GM18951 (cell line): ENCODE measurements at regions of chr13 and their contacts with region 1.

Region 1: DNA sequence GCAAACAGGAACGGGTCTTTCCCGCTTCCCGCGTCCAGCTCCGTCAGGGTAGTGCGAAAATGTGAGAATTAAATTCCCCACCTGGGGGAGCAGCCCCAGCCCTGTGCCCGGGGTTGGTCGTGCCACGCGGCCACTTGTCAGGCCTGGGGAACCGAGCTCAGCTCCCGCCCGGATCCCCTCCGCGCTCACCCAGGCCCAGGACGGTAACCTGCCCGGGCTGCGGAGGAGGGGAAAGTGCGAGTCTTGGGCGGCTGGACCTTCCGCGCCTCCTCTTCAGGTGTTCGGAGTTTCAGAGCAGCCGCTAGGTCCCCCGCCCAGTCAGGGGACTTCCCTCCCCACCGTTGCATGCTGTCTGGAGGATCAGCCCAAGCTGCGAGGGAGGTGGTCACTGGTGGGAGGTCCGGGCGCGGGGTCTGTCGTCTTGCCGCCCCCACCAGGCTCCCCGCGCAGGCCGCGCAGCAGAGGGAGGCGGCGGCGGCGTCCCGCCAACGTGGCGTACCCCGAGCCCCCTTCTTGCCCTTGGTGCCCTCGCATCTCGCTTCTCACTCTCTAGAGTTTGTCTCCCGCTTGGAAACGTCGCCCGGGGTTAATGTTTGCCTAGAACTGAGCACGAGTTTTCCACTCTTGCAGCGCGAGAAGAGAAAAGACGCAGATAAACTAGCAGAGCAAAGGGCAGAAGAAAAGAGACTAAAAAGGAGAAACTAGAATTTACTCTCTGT is 8.1 kb downstream of the URAD start:
- POLR2A ChIP-seq: no peak

Region 2: GRCh38 chr13:27830010-27830409 is 150.4 kb before region 1 on chr13:
- in situ Hi-C with region 1: loop called (anchors 10 kb)
- POLR2A ChIP-seq: no peak

Region 3: DNA sequence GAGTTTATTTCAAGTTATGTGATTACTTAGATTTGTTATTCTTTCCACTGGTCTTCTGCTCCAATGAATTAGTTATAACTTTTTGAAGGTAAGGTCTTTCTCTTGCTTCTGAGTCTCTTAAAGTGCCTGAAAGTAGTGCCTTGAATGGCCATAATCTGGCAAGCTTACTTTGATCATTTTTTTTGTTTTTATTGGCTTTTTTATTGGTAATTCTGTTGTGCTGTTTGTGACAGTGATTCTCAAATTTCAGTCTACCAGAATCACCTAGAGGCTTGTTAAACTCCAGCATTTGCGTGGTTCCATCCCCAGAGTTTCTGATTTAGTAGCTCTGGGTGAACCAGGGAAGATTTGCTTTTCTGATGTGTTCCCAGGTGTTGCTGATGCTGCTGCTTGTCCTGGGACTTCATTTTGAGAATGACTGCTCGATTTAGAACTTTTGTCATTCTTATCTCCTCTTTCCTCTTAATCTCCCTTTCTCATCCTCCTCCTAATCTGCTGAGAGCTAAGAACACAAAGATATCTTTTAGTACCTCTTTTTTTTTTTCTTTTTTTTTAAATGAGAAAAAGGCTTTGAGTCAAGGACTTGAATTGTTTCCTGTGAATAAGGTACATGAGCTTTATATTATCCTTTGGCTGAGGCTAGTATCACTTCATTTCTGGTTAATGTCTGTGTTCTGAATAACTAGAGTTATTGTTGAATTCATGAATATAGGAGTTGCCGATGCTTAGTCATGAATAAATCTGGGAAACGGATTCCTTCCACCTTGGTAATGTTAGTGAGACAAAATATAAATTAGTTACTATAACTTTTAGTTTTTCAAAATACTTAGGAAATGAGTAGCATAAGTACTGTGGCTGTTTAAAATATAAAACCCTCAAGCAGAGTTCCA is 249.3 kb after region 1 on chr13:
- in situ Hi-C with region 1: no loop called
- POLR2A ChIP-seq: no peak

Region 4: GRCh38 chr13:28408235-28408848 is 427.9 kb after region 1 on chr13:
- in situ Hi-C with region 1: no loop called
- POLR2A ChIP-seq: no peak